Activated naive CD4-positive, alpha-beta T cell treated with anti-CD3 and anti-CD28 coated beads for 36 hours (primary cell): ENCODE measurements at regions of chr2 and their contacts with region 1.

Region 1: DNA sequence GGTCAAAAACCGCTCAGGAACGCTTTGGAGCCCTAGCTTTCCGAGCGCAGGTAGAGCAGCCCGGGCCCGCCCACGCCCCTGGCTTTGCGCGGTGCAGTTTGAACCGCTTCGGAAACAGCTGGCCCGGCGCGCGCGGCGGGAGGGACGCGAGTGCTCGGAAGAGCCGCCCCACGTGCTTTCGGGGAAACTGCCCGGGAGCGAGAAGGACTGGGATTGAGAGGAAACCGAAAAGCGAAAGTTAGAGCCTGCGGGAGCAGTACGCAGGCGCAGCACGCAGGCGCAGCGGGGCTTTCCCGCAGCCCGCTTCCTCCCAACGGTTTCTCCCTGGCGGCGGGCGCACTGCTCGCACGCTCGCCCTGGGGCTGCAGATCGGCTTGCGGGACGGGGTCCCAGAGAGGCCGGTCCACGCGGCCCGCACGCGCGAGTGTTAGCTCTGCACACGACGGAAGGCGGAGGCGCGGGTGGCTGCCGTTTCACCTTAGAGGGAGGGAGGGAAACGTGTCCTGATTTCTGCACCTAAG is 6.3 kb upstream of the STAT1 start:
- DNase-seq: peak; percentile 93
- H3K4me3 Mint-ChIP-seq: no peak overlapping the region
- H3K27ac Mint-ChIP-seq: no peak overlapping the region
- H3K4me1 Mint-ChIP-seq: peaks cover 36% of the 10 kb centered on the region
- H3K27me3 Mint-ChIP-seq: no peaks in the 10 kb centered on the region

Region 2: GRCh38 chr2:190408538-190409271 is 611.6 kb before region 1 on chr2:
- CTCF ChIA-PET with region 1: no interaction called
- intact Hi-C with region 1: loop called (anchors 2 kb)
- DNase-seq: peak; percentile 71
- H3K4me3 Mint-ChIP-seq: peak overlapping the region; percentile 84
- H3K27ac Mint-ChIP-seq: peak overlapping the region; percentile 90
- H3K4me1 Mint-ChIP-seq: peaks cover 46% of the 10 kb centered on the region
- H3K27me3 Mint-ChIP-seq: no peaks in the 10 kb centered on the region

Region 3: DNA sequence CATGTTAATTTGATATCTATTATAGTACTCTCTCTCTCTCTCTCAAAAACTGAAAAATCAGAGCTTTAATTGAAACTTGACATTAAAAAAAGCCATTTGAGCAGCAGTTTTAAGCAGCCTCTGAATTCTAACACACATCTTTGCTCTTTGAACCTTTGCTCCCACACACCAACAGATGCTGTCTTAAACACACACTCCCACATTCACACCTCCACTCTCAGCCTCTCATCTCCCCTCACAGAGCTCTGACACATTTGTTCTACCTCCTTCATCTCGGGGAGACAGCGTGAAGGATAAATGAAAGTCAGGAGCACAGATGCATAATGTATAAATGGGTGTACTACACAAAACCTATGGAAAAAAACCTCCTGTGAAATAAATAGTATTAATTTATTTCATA is 276.2 kb before region 1 on chr2:
- CTCF ChIA-PET with region 1: no interaction called
- intact Hi-C with region 1: no loop called
- DNase-seq: peak; percentile 37
- H3K4me3 Mint-ChIP-seq: no peak overlapping the region
- H3K27ac Mint-ChIP-seq: no peak overlapping the region
- H3K4me1 Mint-ChIP-seq: peaks cover 36% of the 10 kb centered on the region
- H3K27me3 Mint-ChIP-seq: no peaks in the 10 kb centered on the region

Region 4: DNA sequence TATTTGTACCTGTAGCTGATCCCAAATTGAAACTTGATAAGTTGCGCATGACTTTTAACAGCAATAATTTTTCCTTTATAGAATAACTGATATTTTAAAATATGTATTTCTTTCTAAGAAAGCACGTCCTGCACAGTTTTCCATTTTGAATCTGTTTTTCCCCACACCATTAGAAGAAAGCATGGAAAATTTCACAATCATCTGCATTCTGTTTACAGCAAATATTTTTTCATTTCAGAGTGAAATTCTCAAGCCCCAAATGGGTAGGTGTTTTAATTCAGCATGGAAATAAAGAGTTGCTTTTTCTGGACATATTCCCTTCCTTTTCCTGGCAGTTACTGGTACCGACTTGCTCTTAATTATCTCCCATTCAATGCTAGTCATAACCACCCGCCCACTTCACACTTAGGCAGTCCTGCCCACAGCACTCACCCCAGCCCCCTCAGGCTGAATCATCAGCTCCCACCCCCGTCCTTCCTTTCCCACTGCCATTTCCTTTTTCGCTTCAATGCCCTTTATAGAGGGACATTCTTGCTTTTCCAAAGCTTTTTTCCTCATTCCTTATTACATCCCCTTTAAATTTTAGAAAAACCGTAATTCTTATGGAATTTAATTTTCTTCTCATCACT is 228.8 kb before region 1 on chr2:
- CTCF ChIA-PET with region 1: no interaction called
- intact Hi-C with region 1: loop called (anchors 2 kb)
- DNase-seq: peak; percentile 67
- H3K4me3 Mint-ChIP-seq: no peak overlapping the region
- H3K27ac Mint-ChIP-seq: peak overlapping the region; percentile 83
- H3K4me1 Mint-ChIP-seq: peaks cover 55% of the 10 kb centered on the region
- H3K27me3 Mint-ChIP-seq: no peaks in the 10 kb centered on the region

Region 5: GRCh38 chr2:191038241-191038725 is 18.0 kb after region 1 on chr2:
- CTCF ChIA-PET with region 1: interaction called, 3 read pairs
- intact Hi-C with region 1: loop called (anchors 1 kb)
- DNase-seq: no peak
- H3K4me3 Mint-ChIP-seq: no peak overlapping the region
- H3K27ac Mint-ChIP-seq: peak overlapping the region; percentile 68
- H3K4me1 Mint-ChIP-seq: peaks cover 35% of the 10 kb centered on the region
- H3K27me3 Mint-ChIP-seq: no peaks in the 10 kb centered on the region

Region 6: GRCh38 chr2:191617575-191617974 is 597.3 kb after region 1 on chr2:
- CTCF ChIA-PET with region 1: no interaction called
- intact Hi-C with region 1: loop called (anchors 5 kb)
- DNase-seq: peak; percentile 79
- H3K4me3 Mint-ChIP-seq: no peak overlapping the region
- H3K27ac Mint-ChIP-seq: peak overlapping the region; percentile 97
- H3K4me1 Mint-ChIP-seq: peaks cover 68% of the 10 kb centered on the region
- H3K27me3 Mint-ChIP-seq: no peaks in the 10 kb centered on the region